Aorta (tissue), 5 donors: ENCODE measurements at regions of chrX and their contacts with region 1.

Region 1: GRCh38 chrX:153927922-153928760 is 2.1 kb upstream of the ARHGAP4 start:
- DNase-seq: peak; percentile 98 to 99
- ATAC-seq: peak; percentile 95
- H3K4me3 ChIP-seq: peak overlapping the region; percentile 31 to 43
- H3K27ac ChIP-seq: peak overlapping the region in 1 of 2 donors; percentile 88
- H3K4me1 ChIP-seq: no peaks in the 10 kb centered on the region
- H3K27me3 ChIP-seq: no peaks in the 10 kb centered on the region

Region 2: DNA sequence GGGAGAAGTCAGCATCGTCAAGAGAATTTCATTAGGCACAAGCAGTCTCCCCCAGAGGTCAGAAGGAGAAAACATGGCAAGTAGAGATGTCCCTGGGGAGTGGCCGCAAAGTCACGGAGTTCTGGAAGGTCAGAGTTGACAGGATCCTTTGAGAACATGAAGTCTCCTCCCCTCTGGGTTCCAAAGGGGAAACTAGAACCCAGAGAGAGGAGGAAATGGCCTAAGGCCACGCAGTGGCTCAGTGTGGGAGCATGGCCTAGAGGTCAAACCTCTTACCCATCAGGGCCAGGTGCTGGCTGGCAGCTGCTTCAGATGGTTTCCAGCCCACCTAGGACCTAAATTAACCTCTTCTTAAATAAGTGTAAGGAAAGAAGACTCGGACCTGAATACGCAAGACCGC is 134.8 kb before region 1 on chrX:
- intact Hi-C with region 1: no loop called
- DNase-seq: no peak
- ATAC-seq: no peak
- H3K4me3 ChIP-seq: peak overlapping the region; percentile 15 to 50
- H3K27ac ChIP-seq: no peak overlapping the region
- H3K4me1 ChIP-seq: no peaks in the 10 kb centered on the region
- H3K27me3 ChIP-seq: no peaks in the 10 kb centered on the region

Region 3: GRCh38 chrX:153806999-153807575 is 121.1 kb before region 1 on chrX:
- intact Hi-C with region 1: no loop called
- DNase-seq: no peak
- ATAC-seq: no peak
- H3K4me3 ChIP-seq: no peak overlapping the region
- H3K27ac ChIP-seq: no peak overlapping the region
- H3K4me1 ChIP-seq: no peaks in the 10 kb centered on the region
- H3K27me3 ChIP-seq: no peaks in the 10 kb centered on the region

Region 4: DNA sequence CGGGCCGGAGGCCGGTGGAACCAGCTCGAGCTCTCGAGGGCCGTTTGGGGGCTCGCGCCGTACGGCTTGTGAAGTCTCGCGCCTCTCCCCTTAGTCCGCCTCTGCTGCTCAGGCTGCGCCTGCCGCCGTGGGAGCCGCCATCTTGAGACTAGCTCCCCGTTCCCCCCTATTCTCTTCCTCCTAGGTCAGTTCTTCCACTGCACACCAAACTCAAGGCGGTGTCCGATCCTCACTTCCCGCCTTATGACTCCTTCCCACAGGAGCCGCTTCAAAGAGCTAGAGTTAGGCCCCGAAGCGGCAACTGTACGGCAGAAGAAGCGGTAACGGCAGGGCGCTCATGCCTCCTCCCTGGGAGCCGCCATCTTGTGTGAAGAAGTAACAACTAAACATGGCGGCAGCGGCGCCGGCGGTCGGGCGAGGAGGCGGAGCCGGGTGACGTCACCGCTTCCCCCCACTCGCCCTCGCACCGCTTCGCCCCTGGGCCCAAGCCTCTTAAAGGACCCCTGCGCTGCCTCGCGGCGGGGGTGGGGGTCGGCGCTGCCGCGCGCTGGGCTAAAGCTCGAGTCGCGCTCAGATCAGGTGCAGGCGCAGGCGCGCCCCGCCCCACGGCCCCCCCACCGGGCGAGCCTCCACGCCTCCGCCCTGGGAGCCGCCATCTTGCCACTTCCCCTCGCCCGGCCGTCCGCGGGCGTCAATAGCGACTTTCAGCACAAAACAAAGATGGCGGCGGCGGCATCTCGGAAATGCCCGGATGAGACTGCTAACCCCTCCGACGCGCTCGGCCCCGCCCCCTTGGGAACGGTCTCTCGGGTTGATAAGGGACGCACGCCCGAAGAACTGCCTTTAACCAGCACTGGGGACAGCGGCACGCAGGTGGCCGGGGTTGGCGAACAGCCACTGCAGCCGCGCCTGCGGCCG is 43.6 kb after region 1 on chrX and contains the start of gene HCFC1:
- intact Hi-C with region 1: loop called in 1 of 2 experiments (anchors 2 kb)
- DNase-seq: peak; percentile 98
- ATAC-seq: peak; percentile 87
- H3K4me3 ChIP-seq: peak within 1 kb of the TSS; percentile 49 to 77
- H3K27ac ChIP-seq: peak within 1 kb of the TSS; percentile 45 to 98
- H3K4me1 ChIP-seq: peaks cover 0 to 4% of the 10 kb centered on the region in 2 donors
- H3K27me3 ChIP-seq: no peaks in the 10 kb centered on the region
- total RNA-seq, gene HCFC1: 41.6 to 41.8 TPM